Thyroid gland (tissue), 4 donors: ENCODE measurements at regions of chr1 and their contacts with region 1.

Region 1: DNA sequence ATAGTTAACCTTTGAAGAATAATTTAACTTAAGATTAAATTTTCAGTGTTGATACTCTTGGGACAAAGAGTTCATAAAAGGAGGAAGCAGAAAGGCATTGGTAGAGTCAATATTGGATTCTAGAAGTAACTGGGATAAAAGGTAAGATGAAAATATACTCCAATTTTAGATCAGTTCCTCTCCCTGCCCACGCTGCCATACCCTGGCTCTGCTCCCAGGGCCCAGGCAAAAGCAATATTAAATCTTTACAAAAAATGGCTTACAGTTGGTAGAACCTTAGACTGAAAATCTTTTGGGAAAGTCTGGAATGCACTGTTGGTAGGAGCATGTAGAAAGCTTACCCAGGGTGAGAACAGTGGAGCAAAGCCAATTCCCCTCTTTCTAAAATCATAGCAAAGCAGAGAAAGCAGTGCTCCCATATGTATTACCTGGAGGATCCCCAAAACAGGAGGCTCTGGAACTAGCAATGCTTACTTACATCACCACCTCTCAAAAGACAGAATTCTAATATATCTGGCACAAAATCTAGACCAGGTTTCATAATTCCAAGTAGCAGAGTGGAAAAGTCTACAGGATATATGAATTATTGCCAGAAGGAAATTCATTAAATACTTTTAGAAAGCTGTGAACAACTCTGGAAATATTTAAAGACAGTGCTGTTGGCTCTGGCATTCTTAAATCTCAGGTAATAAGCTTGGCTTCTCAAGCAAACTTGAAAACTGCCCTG is 24.5 kb downstream of the KIAA0319L start:
- DNase-seq: no peak
- H3K4me3 ChIP-seq: no peak overlapping the region
- H3K27ac ChIP-seq: no peak overlapping the region
- H3K4me1 ChIP-seq: peaks cover 9 to 21% of the 10 kb centered on the region in 2 donors
- H3K27me3 ChIP-seq: no peaks in the 10 kb centered on the region
- CTCF ChIP-seq: no peak
- POLR2A ChIP-seq: no peak

Region 2: GRCh38 chr1:35461966-35462651 is 70.6 kb before region 1 on chr1:
- intact Hi-C with region 1: loop called (anchors 5 kb)
- DNase-seq: no peak
- H3K4me3 ChIP-seq: no peak overlapping the region
- H3K27ac ChIP-seq: no peak overlapping the region
- H3K4me1 ChIP-seq: no peaks in the 10 kb centered on the region
- H3K27me3 ChIP-seq: no peaks in the 10 kb centered on the region
- CTCF ChIP-seq: no peak
- POLR2A ChIP-seq: no peak

Region 3: GRCh38 chr1:35777109-35777508 is 244.4 kb after region 1 on chr1:
- intact Hi-C with region 1: no loop called
- DNase-seq: no peak
- H3K4me3 ChIP-seq: no peak overlapping the region
- H3K27ac ChIP-seq: no peak overlapping the region
- H3K4me1 ChIP-seq: peaks cover 0 to 8% of the 10 kb centered on the region in 2 donors
- H3K27me3 ChIP-seq: no peaks in the 10 kb centered on the region
- CTCF ChIP-seq: no peak
- POLR2A ChIP-seq: no peak